ENCODE measurements at regions of chr7 and their contacts with region 1.

Region 1: GRCh38 chr7:10889266-10889898 is 84.3 kb upstream of the PHF14 start:
- DNase-seq: peak in 1 of 3 donors; percentile 15
- ATAC-seq: peak; percentile 63 to 65
- H3K4me3 ChIP-seq: no peak overlapping the region
- H3K27ac ChIP-seq: no peak overlapping the region
- H3K4me1 ChIP-seq: no peaks in the 10 kb centered on the region
- H3K27me3 ChIP-seq: no peaks in the 10 kb centered on the region

Region 2: DNA sequence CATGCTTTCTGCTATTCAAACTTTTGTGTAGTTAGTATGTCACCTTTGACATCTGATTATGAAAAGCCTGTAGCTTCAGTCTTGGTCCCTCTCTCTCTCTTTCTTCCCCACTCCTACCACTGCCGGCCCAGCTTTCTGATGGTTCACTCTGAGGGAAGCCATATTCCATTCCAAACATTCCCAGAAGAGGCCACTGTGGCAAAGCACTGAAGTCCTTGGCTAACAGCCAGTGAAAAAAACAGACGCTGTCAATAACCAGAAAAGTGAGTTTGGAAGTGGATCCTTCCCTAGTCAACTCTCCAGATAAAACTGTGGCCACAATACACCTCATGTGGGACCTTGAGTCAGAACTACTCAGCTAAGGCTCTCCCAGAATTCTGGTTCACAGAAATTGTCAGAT is 866.4 kb before region 1 on chr7:
- intact Hi-C with region 1: loop called in 1 of 4 experiments (anchors 10 kb)
- DNase-seq: no peak
- ATAC-seq: peak; percentile 47 to 68
- H3K4me3 ChIP-seq: no peak overlapping the region
- H3K27ac ChIP-seq: no peak overlapping the region
- H3K4me1 ChIP-seq: no peaks in the 10 kb centered on the region
- H3K27me3 ChIP-seq: no peaks in the 10 kb centered on the region

Region 3: GRCh38 chr7:11379641-11380040 is 490.3 kb after region 1 on chr7:
- intact Hi-C with region 1: no loop called
- DNase-seq: no peak
- ATAC-seq: no peak
- H3K4me3 ChIP-seq: no peak overlapping the region
- H3K27ac ChIP-seq: no peak overlapping the region
- H3K4me1 ChIP-seq: no peaks in the 10 kb centered on the region
- H3K27me3 ChIP-seq: no peaks in the 10 kb centered on the region

Measured in right cardiac atrium (tissue), 5 donors.